CD8-positive, alpha-beta T cell (primary cell): ENCODE measurements at regions of chr1 and their contacts with region 1.

Region 1: GRCh38 chr1:174999216-174999925 is 376 bp upstream of the CACYBP start:
- DNase-seq: peak; percentile 95 to 99 (median 96)
- ATAC-seq: peak; percentile 76
- H3K4me3 ChIP-seq: peak overlapping the region; percentile 74 to 80
- H3K4me3 Mint-ChIP-seq: no peak overlapping the region
- H3K27ac ChIP-seq: peak overlapping the region; percentile 99 to 100
- H3K27ac Mint-ChIP-seq: no peak overlapping the region
- H3K4me1 ChIP-seq: peaks cover 31% of the 10 kb centered on the region
- H3K4me1 Mint-ChIP-seq: peaks cover 46% of the 10 kb centered on the region
- H3K27me3 ChIP-seq: no peaks in the 10 kb centered on the region
- H3K27me3 Mint-ChIP-seq: no peaks in the 10 kb centered on the region
- CTCF ChIP-seq: no peak

Region 2: DNA sequence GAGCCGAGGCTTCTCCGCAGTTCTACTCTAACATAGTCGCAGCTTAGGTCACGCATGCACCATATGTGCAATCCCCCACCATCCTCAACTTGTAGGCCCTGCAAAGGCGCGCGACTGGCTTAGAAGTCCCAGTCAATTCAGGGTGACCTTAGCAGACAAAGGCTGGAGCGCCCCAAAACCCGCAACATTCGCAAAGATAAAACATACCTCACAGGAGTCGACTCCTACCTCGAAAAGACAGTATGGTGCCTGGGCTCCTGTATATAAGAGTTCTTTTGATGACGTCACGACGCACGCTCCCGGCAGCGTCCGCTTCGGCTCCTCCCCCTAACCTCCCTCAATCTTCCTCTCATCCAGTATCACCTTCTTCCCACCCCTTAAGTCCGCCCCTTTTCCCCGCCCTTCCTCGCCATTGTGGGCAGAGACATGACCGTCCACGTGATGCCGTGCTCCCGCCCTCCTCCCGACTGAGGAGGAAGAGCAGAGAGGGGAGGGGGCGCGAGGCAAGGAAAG is 1131.6 kb before region 1 on chr1 and contains the start of gene GAS5:
- CTCF ChIA-PET with region 1: no interaction called
- POLR2A ChIA-PET with region 1: interaction called, 16 read pairs
- intact Hi-C with region 1: no loop called
- DNase-seq: peak; percentile 97 to 99 (median 98)
- ATAC-seq: peak; percentile 78
- H3K4me3 ChIP-seq: peak within 1 kb of the TSS; percentile 74 to 93
- H3K4me3 Mint-ChIP-seq: peak within 1 kb of the TSS; percentile 95
- H3K27ac ChIP-seq: peak within 1 kb of the TSS; percentile 75 to 93
- H3K27ac Mint-ChIP-seq: peak within 1 kb of the TSS; percentile 96
- H3K4me1 ChIP-seq: peaks cover 61% of the 10 kb centered on the region
- H3K4me1 Mint-ChIP-seq: peaks cover 70% of the 10 kb centered on the region
- H3K27me3 ChIP-seq: no peaks in the 10 kb centered on the region
- H3K27me3 Mint-ChIP-seq: no peaks in the 10 kb centered on the region
- CTCF ChIP-seq: no peak
- total RNA-seq, gene GAS5: 774 to 800 TPM

Region 3: DNA sequence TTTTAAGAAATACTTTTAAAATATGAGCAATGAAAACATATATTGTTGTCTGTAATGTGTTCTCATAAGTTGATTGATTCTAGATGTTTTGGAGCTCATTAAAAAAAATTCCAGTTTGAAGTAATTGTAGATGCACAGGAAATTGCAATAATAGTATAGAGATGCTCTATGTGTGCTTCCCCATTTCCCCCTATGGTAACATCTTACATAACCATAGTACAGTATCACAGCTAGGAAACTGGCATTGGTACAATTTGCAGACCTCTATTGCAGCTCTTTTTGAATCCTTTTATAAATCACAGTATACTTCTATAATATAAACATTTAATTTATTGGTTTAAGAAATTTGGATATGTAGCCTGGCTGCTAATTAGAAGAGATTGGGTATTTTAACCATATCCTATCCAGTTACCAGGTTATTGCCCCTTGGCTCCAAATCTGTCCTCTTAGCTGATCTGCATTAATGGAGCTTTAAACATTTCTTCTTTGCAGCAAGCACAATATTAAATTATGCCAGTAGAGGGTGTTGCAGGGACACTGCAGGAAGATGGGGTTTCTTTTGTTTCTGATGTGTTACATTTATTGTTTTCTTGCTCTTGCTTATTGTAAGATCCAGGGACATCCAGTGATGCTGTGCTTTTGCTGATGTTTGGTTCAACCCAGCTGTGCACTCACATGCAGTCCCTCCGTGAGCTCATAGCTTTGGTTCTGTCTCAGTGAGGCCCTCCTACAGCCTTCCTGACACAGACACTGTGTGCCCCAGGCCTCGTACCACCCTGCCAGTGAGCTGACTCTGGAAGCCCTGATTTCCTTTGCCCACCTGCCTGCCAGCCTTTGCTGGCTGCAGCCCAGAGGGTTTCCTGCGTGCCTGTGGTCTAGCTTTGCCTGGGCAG is 736.8 kb before region 1 on chr1:
- CTCF ChIA-PET with region 1: no interaction called
- POLR2A ChIA-PET with region 1: interaction called, 5 read pairs
- intact Hi-C with region 1: loop called in 1 of 2 experiments (anchors 5 kb)
- DNase-seq: peak in 2 of 9 experiments; percentile 33 to 52
- ATAC-seq: no peak
- H3K4me3 ChIP-seq: no peak overlapping the region
- H3K4me3 Mint-ChIP-seq: no peak overlapping the region
- H3K27ac ChIP-seq: no peak overlapping the region
- H3K27ac Mint-ChIP-seq: no peak overlapping the region
- H3K4me1 ChIP-seq: no peaks in the 10 kb centered on the region
- H3K4me1 Mint-ChIP-seq: no peaks in the 10 kb centered on the region
- H3K27me3 ChIP-seq: no peaks in the 10 kb centered on the region
- H3K27me3 Mint-ChIP-seq: no peaks in the 10 kb centered on the region
- CTCF ChIP-seq: peak; percentile 55

Region 4: GRCh38 chr1:174800216-174800851 is 199.0 kb before region 1 on chr1:
- CTCF ChIA-PET with region 1: interaction called, 10 read pairs
- POLR2A ChIA-PET with region 1: interaction called, 34 read pairs
- intact Hi-C with region 1: loop called (anchors 1 to 2 kb)
- DNase-seq: peak in 4 of 9 experiments; percentile 6 to 37 (median 12)
- ATAC-seq: peak; percentile 3
- H3K4me3 ChIP-seq: peak overlapping the region; percentile 63 to 69
- H3K4me3 Mint-ChIP-seq: no peak overlapping the region
- H3K27ac ChIP-seq: peak overlapping the region; percentile 67 to 82
- H3K27ac Mint-ChIP-seq: no peak overlapping the region
- H3K4me1 ChIP-seq: peaks cover 15% of the 10 kb centered on the region
- H3K4me1 Mint-ChIP-seq: peaks cover 17% of the 10 kb centered on the region
- H3K27me3 ChIP-seq: no peaks in the 10 kb centered on the region
- H3K27me3 Mint-ChIP-seq: no peaks in the 10 kb centered on the region
- CTCF ChIP-seq: no peak

Region 5: DNA sequence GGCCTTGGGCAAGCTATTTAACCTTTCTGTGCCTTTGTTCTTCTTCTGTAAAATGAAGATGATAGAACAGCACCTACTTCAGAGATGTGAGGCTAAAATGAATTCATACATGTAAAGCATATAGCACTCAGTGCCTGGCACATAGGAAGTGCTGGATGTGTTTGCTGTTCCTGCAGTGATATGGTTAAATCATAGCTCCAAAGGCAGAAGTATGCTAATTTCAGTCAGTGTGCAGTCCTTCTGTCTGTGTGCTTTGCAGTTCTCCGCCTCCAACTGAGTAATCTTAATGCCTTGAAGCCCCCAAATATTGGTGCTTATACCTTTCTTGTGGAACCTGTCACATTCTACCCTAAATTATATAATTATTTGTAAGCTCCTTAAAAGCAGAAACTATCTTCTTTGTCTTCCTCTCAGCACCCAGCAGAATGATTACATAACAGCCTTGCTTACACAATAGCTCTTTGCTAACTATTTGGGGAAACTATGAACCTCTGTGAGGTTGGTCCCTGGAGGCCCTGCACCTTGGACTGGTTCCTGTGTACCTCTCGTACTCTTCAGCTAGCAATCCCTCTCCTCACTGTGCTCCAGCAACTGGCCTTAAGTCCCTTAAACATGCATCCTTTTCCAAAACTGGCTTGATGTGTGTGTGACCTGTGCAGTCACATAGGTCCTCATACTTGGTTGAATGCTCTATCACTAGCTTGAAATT is 56.7 kb before region 1 on chr1:
- CTCF ChIA-PET with region 1: no interaction called
- POLR2A ChIA-PET with region 1: interaction called, 4 read pairs
- intact Hi-C with region 1: loop called in 1 of 2 experiments (anchors 1 kb)
- DNase-seq: no peak
- ATAC-seq: no peak
- H3K4me3 ChIP-seq: no peak overlapping the region
- H3K4me3 Mint-ChIP-seq: no peak overlapping the region
- H3K27ac ChIP-seq: no peak overlapping the region
- H3K27ac Mint-ChIP-seq: no peak overlapping the region
- H3K4me1 ChIP-seq: peaks cover 5% of the 10 kb centered on the region
- H3K4me1 Mint-ChIP-seq: peaks cover 12% of the 10 kb centered on the region
- H3K27me3 ChIP-seq: no peaks in the 10 kb centered on the region
- H3K27me3 Mint-ChIP-seq: no peaks in the 10 kb centered on the region
- CTCF ChIP-seq: no peak

Region 6: GRCh38 chr1:174982971-174983689 is 16.2 kb before region 1 on chr1:
- CTCF ChIA-PET with region 1: interaction called, 13 read pairs
- POLR2A ChIA-PET with region 1: interaction called, 19 read pairs
- intact Hi-C with region 1: no loop called
- DNase-seq: peak in 5 of 9 experiments; percentile 41 to 77 (median 63)
- ATAC-seq: peak; percentile 48
- H3K4me3 ChIP-seq: no peak overlapping the region
- H3K4me3 Mint-ChIP-seq: no peak overlapping the region
- H3K27ac ChIP-seq: no peak overlapping the region
- H3K27ac Mint-ChIP-seq: no peak overlapping the region
- H3K4me1 ChIP-seq: peaks cover 9% of the 10 kb centered on the region
- H3K4me1 Mint-ChIP-seq: peaks cover 38% of the 10 kb centered on the region
- H3K27me3 ChIP-seq: no peaks in the 10 kb centered on the region
- H3K27me3 Mint-ChIP-seq: no peaks in the 10 kb centered on the region
- CTCF ChIP-seq: peak; percentile 56

Region 7: DNA sequence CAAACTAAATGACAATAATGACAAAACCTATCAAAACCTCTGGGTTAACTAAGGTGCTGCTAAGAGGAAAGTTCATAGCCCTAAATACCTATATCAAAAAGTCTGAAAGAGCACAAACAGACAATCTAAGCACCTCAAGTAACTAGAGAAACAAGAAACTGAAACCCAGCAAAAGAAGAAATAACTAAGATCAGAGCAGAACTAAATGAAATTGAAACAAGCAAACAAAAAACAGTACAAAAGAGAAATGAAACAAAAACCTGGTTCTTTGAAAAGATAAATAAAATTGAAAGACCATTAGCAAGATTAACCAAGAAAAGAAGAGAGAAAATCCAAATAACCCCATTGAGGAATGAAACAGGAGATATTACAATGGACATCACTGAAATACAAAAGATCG is 238.0 kb after region 1 on chr1:
- CTCF ChIA-PET with region 1: no interaction called
- POLR2A ChIA-PET with region 1: no interaction called
- intact Hi-C with region 1: no loop called
- DNase-seq: no peak
- ATAC-seq: no peak
- H3K4me3 ChIP-seq: no peak overlapping the region
- H3K4me3 Mint-ChIP-seq: no peak overlapping the region
- H3K27ac ChIP-seq: no peak overlapping the region
- H3K27ac Mint-ChIP-seq: no peak overlapping the region
- H3K4me1 ChIP-seq: peaks cover 13% of the 10 kb centered on the region
- H3K4me1 Mint-ChIP-seq: peaks cover 16% of the 10 kb centered on the region
- H3K27me3 ChIP-seq: no peaks in the 10 kb centered on the region
- H3K27me3 Mint-ChIP-seq: no peaks in the 10 kb centered on the region
- CTCF ChIP-seq: no peak